ENCODE measurements at regions of chr1 and their contacts with region 1.

Region 1: GRCh38 chr1:204128964-204129896 is 22.6 kb downstream of the ETNK2 start:
- DNase-seq: peak; percentile 66
- H3K4me3 Mint-ChIP-seq: no peak overlapping the region
- H3K27ac Mint-ChIP-seq: no peak overlapping the region
- H3K4me1 Mint-ChIP-seq: peaks cover 9% of the 10 kb centered on the region
- H3K27me3 Mint-ChIP-seq: no peaks in the 10 kb centered on the region

Region 2: DNA sequence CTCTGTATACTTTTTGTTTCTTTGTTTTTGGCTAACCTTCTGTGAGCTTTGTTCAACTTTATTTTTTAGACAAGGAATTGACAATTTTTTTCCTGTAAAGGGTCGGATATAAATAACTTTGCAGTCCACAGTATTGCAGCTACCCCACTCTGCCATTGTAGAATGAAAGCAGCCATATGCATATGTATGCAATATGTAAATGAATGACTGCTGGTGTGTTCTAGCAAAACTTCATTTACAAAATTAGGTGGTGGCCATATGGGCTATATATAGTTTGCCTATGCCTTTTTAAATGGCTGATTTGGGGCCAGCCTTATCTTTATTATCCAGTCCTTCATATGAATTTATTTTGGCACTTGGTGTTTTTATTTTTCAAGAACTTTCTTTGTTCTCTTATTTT is 285.8 kb before region 1 on chr1:
- CTCF ChIA-PET with region 1: interaction called, 12 read pairs
- POLR2A ChIA-PET with region 1: no interaction called
- DNase-seq: no peak
- H3K4me3 Mint-ChIP-seq: no peak overlapping the region
- H3K27ac Mint-ChIP-seq: no peak overlapping the region
- H3K4me1 Mint-ChIP-seq: no peaks in the 10 kb centered on the region
- H3K27me3 Mint-ChIP-seq: no peaks in the 10 kb centered on the region

Region 3: GRCh38 chr1:203861379-203862184 is 267.6 kb before region 1 on chr1 and contains the start of gene SNRPE:
- CTCF ChIA-PET with region 1: interaction called, 46 read pairs
- POLR2A ChIA-PET with region 1: interaction called, 7 read pairs
- DNase-seq: peak; percentile 97
- H3K4me3 Mint-ChIP-seq: peak within 1 kb of the TSS; percentile 97
- H3K27ac Mint-ChIP-seq: peak within 1 kb of the TSS; percentile 82
- H3K4me1 Mint-ChIP-seq: peaks cover 30% of the 10 kb centered on the region
- H3K27me3 Mint-ChIP-seq: no peaks in the 10 kb centered on the region
- total RNA-seq, gene SNRPE: 151 to 163 TPM

Region 4: DNA sequence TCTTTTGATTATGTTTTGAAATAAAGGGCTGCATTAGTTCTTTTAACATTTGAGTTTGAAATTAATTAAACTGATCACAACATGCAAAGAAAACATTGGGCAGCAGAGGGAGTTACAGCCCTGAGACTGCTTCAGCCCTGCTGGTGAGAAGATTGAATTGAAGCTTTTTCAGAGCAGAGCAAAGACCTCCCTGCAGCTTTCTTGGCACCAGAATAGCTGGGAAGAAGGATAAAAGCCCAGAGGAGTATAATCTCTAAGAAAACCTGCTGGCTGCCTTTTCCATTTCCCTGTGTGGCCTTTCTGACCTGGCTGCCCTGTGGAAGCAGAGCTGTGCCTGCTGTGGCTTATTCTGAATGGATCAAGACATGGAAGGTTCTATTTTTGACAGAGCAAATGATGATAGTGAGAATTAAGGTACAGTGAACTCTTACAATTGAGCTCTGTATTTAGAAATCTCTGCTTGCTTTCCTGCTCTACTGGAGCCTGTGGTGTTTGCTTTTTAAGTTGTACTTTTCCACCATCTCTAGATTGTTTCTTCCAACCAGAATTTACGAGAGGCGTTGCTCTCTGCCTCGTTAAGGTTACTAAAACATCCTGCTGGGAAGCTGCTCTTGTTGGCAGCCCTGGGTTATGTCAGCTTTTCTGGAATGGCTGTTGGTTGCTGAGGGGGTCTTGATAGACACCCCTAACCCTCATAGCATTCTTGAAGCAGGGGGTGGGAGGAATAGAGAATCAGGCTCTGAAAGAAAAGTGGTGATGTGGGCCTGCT is 257.9 kb before region 1 on chr1:
- CTCF ChIA-PET with region 1: interaction called, 89 read pairs
- POLR2A ChIA-PET with region 1: interaction called, 7 read pairs
- DNase-seq: peak; percentile 23
- H3K4me3 Mint-ChIP-seq: no peak overlapping the region
- H3K27ac Mint-ChIP-seq: no peak overlapping the region
- H3K4me1 Mint-ChIP-seq: no peaks in the 10 kb centered on the region
- H3K27me3 Mint-ChIP-seq: no peaks in the 10 kb centered on the region

Region 5: GRCh38 chr1:204115116-204115515 is 14.1 kb before region 1 on chr1:
- CTCF ChIA-PET with region 1: interaction called, 11 read pairs
- POLR2A ChIA-PET with region 1: no interaction called
- DNase-seq: no peak
- H3K4me3 Mint-ChIP-seq: no peak overlapping the region
- H3K27ac Mint-ChIP-seq: no peak overlapping the region
- H3K4me1 Mint-ChIP-seq: peaks cover 3% of the 10 kb centered on the region
- H3K27me3 Mint-ChIP-seq: no peaks in the 10 kb centered on the region

Measured in activated CD4-positive, alpha-beta memory T cell treated with anti-CD3 and anti-CD28 coated beads, Interleukin-2, amount 10 ng/mL, durations not matched to agents 7 days and 5 days (primary cell).